WTC11 (cell line): ENCODE measurements at regions of chr15 and their contacts with region 1.

Region 1: DNA sequence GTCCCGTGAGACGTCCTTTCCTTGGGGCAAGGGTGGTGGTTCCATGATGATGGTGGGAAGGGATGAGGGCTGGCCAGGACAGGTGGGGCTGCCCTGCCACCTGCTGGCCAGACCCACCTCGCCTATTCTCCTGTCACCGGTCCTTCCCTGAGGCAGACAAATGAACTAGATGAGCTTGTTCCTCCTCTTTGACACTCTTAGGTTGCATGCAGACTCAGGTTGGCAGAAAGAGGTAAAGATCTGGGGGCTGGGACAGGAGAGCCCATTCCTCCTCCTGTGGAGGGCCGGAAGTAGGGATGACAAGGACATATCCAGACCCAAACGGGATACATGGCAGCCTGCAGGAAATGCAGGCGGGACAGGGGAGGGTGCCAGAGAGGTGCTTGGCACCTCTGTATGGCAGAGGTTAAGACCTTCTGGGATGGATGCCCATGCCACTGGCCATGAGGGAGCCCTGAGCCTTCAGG is 38.6 kb downstream of the ACSBG1 start:
- DNase-seq: peak; percentile 52
- ATAC-seq: peak; percentile 95
- H3K4me3 Mint-ChIP-seq: no peak overlapping the region
- H3K27ac Mint-ChIP-seq: no peak overlapping the region
- H3K4me1 Mint-ChIP-seq: no peaks in the 10 kb centered on the region
- H3K27me3 Mint-ChIP-seq: no peaks in the 10 kb centered on the region
- CTCF ChIP-seq: peak; percentile 60

Region 2: DNA sequence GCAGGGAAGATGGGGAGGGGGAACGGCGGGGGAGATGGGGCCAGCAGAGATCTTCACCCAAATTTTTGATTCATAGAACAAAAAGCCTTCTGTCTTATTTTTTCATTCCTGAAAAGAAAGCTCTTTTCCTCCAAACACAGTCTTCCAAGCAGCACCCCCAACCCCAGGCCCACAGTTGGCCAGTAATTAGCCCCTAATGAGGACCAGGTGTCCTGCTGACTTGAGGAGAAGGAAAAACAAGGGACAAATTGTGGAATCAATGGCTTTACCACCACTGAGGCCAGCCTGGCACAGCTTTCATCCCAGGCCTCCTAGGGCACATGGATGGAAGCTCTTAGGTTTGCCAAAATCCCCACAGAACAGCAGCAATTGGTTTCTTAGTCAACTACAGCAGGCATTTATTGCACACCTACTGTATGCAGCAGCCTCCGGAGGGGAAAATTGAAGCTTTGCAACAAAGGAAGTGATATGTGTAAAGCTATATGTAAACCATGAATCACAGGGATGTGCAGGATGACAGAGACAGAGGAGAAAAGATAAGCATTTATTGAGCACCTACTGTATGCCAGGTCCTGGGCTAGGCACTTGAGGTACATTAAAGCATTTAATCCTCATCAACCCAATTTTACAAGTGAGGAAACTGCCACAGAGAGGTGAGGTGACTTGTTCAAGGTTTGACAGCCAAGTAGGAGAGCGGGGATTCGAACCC is 317.7 kb before region 1 on chr15:
- CTCF ChIA-PET with region 1: no interaction called
- POLR2A ChIA-PET with region 1: no interaction called
- DNase-seq: no peak
- ATAC-seq: no peak
- H3K4me3 Mint-ChIP-seq: no peak overlapping the region
- H3K27ac Mint-ChIP-seq: no peak overlapping the region
- H3K4me1 Mint-ChIP-seq: no peaks in the 10 kb centered on the region
- H3K27me3 Mint-ChIP-seq: no peaks in the 10 kb centered on the region
- CTCF ChIP-seq: no peak

Region 3: DNA sequence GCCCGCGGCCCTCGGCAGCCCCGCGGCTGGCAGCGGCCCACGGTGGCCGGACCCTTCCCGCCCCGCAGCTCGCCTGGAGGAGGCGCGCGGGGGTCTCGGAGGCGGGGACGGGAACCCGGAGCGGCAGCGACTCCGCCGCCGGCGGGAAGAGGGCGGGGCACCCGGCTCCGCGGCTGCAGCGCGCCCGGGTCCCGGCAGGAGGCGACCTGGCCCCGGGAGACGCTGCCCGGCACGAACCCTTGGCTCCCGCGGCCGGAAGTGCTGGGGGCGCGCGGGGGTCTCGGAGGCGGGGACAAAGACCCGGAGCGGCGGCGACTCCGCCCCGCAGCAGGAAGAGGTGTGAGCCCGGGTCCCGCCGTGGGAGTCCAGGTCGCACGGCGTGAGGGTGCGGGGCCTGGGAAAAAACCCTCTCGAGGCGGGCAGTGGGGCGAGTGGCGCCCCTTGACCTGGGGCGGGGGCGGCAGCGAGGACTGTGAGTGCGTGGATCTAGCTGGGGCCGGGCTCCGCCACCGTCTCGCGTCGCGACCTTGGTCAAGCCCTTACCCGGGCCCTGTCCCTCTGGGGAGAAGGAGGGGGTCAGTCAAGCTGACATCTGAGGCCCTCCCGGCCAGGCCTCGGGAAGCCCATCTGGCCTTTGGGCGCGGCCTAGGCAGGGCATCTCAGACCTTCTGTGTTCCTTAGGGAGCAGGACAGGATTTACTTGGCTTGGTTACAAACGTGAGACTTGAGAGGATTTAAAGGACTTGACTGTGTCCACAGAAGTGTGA is 64.3 kb before region 1 on chr15 and contains the start of gene CIB2:
- CTCF ChIA-PET with region 1: interaction called, 17 read pairs
- POLR2A ChIA-PET with region 1: no interaction called
- DNase-seq: peak; percentile 82
- ATAC-seq: peak; percentile 85
- H3K4me3 Mint-ChIP-seq: peak within 1 kb of the TSS; percentile 84
- H3K27ac Mint-ChIP-seq: peak within 1 kb of the TSS; percentile 88
- H3K4me1 Mint-ChIP-seq: peaks cover 32% of the 10 kb centered on the region
- H3K27me3 Mint-ChIP-seq: no peaks in the 10 kb centered on the region
- CTCF ChIP-seq: peak; percentile 35; the same call in 1 of the 2 replicates
- total RNA-seq, gene CIB2: 45.2 to 56.4 TPM (median 56.2 TPM) in 3 replicates

Region 4: DNA sequence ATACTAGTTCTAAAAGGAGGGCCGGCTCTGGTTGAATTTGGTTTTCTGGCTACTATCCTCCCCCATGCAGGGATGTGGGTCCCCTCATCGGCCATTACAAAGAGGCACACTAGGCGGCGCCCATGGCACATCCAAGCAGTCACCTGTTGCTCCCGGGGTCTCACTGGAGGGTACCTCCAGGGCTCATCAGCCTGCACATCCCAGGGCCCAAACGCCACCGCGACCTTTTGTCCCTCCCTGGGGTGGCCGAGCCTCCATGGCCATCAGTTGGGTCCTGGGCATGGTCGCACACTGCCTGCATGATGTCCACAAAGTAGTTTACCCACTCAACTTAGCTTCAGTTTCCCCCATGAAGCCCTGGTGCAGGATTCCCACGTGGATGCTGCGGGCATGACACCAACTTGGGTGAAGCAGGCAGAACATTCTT is 18.3 kb before region 1 on chr15:
- CTCF ChIA-PET with region 1: interaction called, 13 read pairs
- POLR2A ChIA-PET with region 1: no interaction called
- DNase-seq: peak; percentile 87
- ATAC-seq: peak; percentile 97
- H3K4me3 Mint-ChIP-seq: no peak overlapping the region
- H3K27ac Mint-ChIP-seq: no peak overlapping the region
- H3K4me1 Mint-ChIP-seq: peaks cover under 1% of the 10 kb centered on the region; the same call in 1 of the 2 replicates
- H3K27me3 Mint-ChIP-seq: no peaks in the 10 kb centered on the region
- CTCF ChIP-seq: peak; percentile 70

Region 5: DNA sequence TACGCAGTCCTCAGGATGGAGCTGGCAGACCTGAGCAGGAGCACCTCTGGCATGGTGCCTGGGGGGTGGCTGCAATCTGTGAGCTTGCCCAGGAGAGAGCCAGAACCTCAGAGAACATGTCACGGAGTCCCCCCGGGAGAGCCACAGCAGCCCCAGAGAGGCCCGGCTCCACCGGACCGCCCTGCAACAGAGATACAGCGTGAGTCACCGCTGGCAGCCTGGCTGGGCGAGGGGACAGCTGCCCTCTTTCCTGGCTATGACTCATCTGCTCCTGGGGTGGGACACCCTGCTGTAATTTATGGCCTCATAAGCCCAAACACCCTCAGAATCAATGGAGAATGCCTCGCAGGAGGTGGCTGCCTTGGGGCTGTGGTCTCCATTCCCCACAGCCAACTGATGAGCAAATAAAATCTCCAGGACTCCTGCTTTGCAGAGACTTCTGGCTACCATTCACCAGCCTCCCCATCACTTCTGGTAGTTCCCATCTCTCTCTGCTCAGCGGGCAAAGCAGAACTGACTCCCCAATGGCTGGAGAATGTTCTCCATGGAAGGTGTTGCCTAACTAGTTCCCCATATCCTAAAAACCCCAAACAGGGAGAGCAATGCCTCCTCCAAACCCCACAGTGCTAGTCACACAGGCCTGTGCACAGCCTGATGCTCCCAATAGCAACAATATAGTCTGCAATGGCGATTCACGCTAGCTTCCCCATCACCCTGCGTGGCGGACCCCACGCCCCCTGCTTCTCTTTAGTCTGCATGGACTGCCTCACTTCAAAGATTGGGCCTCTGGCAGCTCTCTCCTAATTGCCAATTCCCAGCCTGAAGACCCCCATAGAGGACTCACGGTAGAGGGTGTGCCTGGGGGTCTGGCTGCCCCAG is 17.0 kb after region 1 on chr15:
- CTCF ChIA-PET with region 1: interaction called, 12 read pairs
- POLR2A ChIA-PET with region 1: no interaction called
- DNase-seq: no peak
- ATAC-seq: no peak
- H3K4me3 Mint-ChIP-seq: no peak overlapping the region
- H3K27ac Mint-ChIP-seq: no peak overlapping the region
- H3K4me1 Mint-ChIP-seq: peaks cover 6% of the 10 kb centered on the region
- H3K27me3 Mint-ChIP-seq: no peaks in the 10 kb centered on the region
- CTCF ChIP-seq: no peak